ENCODE measurements at regions of chr1 and their contacts with region 1.

Region 1: DNA sequence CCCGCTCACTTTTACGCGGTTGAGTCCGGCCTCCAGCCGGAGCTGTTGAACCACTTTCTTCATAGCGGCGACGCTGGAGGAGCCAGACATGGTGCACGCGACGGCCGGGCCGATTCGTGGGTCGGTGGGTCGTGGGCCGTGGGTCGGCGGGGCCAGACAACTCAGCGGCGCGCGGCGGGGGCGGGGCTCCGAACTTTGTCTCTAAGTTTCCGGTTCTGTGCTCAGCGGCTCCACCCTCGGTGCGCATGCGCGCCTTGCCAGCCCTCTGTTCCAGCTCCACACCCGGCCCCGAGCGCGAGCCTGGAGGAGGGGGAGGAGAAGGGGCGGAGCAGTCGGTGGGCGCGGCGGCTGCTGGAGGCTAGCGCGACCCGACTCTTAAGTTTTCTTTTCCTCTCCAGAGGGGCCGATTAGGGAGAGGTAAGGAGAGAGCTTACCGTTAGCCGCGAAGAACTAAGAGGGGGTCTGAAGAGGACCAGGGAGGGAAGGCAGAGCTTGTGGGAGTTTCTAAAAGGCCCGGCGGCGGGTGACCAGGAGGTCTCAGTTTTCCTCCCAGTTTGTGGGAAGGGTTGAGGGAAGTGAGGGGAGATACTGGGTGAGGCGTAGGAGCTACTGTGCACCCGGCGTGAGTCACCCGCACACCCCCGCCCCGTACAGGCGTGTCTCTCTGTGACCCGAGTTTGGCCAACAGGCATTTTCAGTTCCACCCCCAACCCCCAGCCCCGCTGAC is at the starts of genes GNG5 and SPATA1:
- DNase-seq: peak; percentile 96 to 97
- H3K4me3 ChIP-seq: peak within 1 kb of the TSS; percentile 76 to 88 (median 83)
- H3K27ac ChIP-seq: peak within 1 kb of the TSS; percentile 96 to 98
- H3K4me1 ChIP-seq: peaks cover 0 to 7% of the 10 kb centered on the region in 2 donors
- H3K27me3 ChIP-seq: no peaks in the 10 kb centered on the region
- CTCF ChIP-seq: no peak
- POLR2A ChIP-seq: peak; percentile 39
- total RNA-seq, gene GNG5: 47.8 to 66.6 (median 47.9) TPM
- total RNA-seq, gene SPATA1: 0.16 to 1.0 (median 0.33) TPM

Region 2: GRCh38 chr1:84245563-84245962 is 260.6 kb before region 1 on chr1:
- intact Hi-C with region 1: no loop called
- DNase-seq: no peak
- H3K4me3 ChIP-seq: no peak overlapping the region
- H3K27ac ChIP-seq: no peak overlapping the region
- H3K4me1 ChIP-seq: no peaks in the 10 kb centered on the region
- H3K27me3 ChIP-seq: no peaks in the 10 kb centered on the region
- CTCF ChIP-seq: no peak
- POLR2A ChIP-seq: no peak

Region 3: GRCh38 chr1:84301004-84301784 is 205.0 kb before region 1 on chr1 and contains the start of gene SAMD13:
- intact Hi-C with region 1: no loop called
- DNase-seq: peak; percentile 55 to 64
- H3K4me3 ChIP-seq: peak within 1 kb of the TSS; percentile 25 to 57 (median 42)
- H3K27ac ChIP-seq: peak within 1 kb of the TSS; percentile 75 to 93
- H3K4me1 ChIP-seq: peaks cover 0 to 4% of the 10 kb centered on the region in 2 donors
- H3K27me3 ChIP-seq: no peaks in the 10 kb centered on the region
- CTCF ChIP-seq: no peak
- POLR2A ChIP-seq: no peak
- total RNA-seq, gene SAMD13: 2.1 to 3.1 (median 2.6) TPM

Region 4: GRCh38 chr1:84492726-84493125 is 13.4 kb before region 1 on chr1:
- intact Hi-C with region 1: loop called (anchors 2 kb)
- DNase-seq: no peak
- H3K4me3 ChIP-seq: no peak overlapping the region
- H3K27ac ChIP-seq: no peak overlapping the region
- H3K4me1 ChIP-seq: no peaks in the 10 kb centered on the region
- H3K27me3 ChIP-seq: no peaks in the 10 kb centered on the region
- CTCF ChIP-seq: no peak
- POLR2A ChIP-seq: no peak

Region 5: DNA sequence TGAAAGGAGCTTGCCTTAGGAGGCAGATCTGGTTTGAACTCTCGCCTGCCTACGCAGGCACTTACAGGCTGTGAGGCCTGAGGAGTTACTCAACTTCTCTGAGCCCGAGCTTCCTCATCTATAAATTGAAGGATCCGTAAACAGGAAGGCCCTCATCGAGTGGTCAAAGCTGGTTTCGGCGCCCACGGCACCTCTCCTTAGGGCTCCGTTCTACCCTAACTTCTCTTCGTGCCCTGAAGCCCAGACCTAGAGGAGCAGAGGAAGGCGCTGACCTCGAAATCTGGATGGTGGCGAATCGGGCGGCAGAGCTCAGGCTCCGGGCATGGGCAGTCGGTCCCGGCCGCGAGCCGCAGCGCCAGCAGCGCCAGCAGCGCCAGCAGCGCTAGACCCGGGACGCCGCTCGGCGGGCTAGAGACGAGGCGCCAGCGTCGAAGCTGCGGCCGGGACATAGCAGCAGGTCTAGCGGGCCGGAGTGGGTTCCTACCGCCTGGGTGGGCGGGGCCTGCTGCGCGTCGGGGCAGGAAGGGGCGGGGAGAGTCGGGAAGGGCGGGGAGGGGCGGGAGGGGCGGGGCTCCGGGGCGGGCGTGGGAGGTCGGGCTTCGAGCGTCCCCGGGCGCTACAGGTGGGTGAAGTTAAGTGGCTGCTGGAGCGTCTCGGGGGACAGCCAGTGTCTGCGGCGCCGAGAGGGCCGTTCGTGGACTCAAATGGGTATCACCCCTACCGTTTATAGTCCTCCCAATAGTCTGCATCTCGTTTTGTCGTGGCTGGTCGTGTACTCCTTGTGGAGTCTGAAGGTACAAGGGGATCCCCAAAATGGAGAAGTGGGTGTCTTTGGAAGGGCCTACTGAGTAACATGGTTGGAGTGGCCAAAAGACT is 68.0 kb after region 1 on chr1 and contains the start of gene CTBS:
- intact Hi-C with region 1: loop called (anchors 10 kb)
- DNase-seq: peak; percentile 68 to 83
- H3K4me3 ChIP-seq: peak within 1 kb of the TSS; percentile 57 to 78 (median 75)
- H3K27ac ChIP-seq: peak within 1 kb of the TSS; percentile 94 to 97
- H3K4me1 ChIP-seq: no peaks in the 10 kb centered on the region
- H3K27me3 ChIP-seq: no peaks in the 10 kb centered on the region
- CTCF ChIP-seq: no peak
- POLR2A ChIP-seq: no peak
- total RNA-seq, gene CTBS: 18.4 to 22.9 (median 22.5) TPM